Posterior vena cava (tissue), 2 donors: ENCODE measurements at regions of chr3 and their contacts with region 1.

Region 1: DNA sequence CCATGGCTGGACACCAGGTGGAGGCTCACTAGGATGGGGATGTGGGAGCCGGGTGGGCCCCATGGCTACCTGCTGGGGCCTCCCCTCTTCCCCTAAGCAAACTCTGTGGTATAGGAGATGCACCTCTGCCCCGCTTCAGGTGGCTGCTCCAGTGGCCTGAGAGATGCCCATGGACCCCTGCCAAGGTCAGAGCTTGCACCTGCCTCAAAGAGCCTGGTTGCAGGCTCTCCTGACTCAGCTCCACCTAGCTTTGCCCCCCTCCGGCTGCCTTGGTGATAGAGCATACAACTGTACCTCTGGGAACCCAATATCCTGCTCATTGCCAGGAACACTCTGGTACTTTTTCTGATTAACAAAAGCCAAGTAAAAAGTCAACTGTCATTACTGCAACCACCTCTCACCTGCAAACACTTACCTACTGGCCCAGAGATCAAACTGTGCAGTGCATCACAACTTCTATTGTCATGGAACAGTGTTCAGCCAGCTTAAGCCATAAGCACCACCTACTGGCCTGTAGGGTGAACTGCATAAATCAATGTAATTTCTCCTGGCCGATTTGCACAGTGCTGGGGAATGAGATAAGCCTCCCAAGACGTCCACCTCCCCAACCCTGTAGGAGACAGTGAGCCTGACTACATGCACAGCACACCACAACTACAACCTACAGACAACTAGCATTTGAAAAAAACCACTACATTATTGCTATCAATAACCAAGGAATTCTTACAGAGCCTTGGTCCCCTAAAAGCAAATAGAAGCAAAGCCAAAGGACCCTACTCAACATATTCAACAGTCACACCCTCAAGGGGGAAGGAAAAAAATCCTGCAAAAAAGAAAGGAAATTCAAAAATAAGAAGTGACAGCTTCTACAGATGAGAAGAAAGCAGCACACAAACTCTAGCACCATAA is 352.4 kb upstream of the ARHGEF26 start:
- DNase-seq: no peak

Region 2: GRCh38 chr3:153043729-153044328 is 725.0 kb before region 1 on chr3:
- intact Hi-C with region 1: loop called in 1 of 2 experiments (anchors 10 kb)
- DNase-seq: no peak

Region 3: GRCh38 chr3:153161138-153161713 is 607.6 kb before region 1 on chr3:
- intact Hi-C with region 1: loop called in 1 of 2 experiments (anchors 10 kb)
- DNase-seq: peak; percentile 97

Region 4: DNA sequence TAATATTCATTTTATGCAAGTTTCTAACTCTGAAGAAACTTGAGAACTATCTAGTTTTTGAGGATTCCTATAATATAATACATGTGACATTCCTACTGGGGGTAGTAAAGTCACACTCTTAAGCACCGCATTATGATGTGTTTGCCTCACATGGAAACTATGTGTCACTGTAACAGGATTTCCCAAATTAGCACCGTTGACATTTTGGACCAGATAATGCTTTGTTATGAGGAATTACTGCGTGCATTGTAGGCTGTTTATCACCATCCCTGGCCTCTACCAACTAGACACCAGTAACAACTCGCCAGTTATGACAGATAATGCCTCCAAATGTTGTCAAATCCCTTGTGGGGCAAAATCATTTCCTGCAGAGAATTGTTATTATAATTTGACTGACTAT is 339.0 kb before region 1 on chr3:
- intact Hi-C with region 1: no loop called
- DNase-seq: no peak

Region 5: DNA sequence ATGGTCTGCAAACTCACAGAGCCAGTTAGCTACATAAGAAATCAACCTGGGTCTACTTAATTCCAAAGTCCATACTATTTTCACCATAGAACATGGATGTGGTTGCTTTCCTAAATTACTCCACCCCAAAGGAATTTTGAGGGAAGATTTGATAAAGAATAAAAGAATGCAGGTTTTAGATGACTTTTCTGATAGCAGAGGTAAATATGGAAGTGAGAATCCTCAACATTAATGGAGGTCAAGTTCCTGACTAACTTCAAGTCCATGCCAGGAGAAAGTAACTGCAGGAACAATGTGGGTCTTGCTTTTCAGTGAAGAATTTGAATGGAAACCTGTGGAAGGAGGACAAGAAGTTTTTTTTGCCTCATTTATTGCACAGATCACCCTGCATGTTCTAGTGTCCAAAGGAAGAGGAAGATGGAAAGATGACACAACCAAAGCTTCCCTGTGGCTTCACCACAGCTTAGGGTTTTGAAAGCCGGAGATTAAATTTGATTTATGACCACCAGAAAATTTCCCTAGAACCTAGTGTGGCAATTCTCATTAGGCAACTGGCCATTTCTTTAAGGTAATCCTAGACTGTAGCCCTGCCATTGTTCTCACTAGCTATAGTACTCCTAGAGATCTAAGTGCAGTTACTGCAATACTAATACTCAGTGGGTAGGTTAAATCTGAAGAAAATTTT is 177.1 kb before region 1 on chr3:
- intact Hi-C with region 1: no loop called
- DNase-seq: no peak